ENCODE measurements at regions of chr5 and their contacts with region 1.

Region 1: GRCh38 chr5:142769741-142770631 is at the start of gene ARHGAP26:
- DNase-seq: peak; percentile 82 to 93 (median 87)
- ATAC-seq: peak; percentile 94
- H3K4me3 ChIP-seq: peak within 1 kb of the TSS; percentile 86
- H3K4me3 Mint-ChIP-seq: peak within 1 kb of the TSS; percentile 87 to 100 (median 96)
- H3K27ac ChIP-seq: peak within 1 kb of the TSS; percentile 77
- H3K27ac Mint-ChIP-seq: peak within 1 kb of the TSS; percentile 89 to 98 (median 92)
- H3K4me1 ChIP-seq: peaks cover 9 to 15% of the 10 kb centered on the region in 2 donors
- H3K4me1 Mint-ChIP-seq: peaks cover 30 to 39% (median 35%) of the 10 kb centered on the region in 7 donors
- H3K27me3 ChIP-seq: no peaks in the 10 kb centered on the region
- H3K27me3 Mint-ChIP-seq: peaks cover 0 to 3% (median 0%) of the 10 kb centered on the region in 5 donors
- total RNA-seq, gene ARHGAP26: 20.1 to 123 (median 29.1) TPM

Region 2: DNA sequence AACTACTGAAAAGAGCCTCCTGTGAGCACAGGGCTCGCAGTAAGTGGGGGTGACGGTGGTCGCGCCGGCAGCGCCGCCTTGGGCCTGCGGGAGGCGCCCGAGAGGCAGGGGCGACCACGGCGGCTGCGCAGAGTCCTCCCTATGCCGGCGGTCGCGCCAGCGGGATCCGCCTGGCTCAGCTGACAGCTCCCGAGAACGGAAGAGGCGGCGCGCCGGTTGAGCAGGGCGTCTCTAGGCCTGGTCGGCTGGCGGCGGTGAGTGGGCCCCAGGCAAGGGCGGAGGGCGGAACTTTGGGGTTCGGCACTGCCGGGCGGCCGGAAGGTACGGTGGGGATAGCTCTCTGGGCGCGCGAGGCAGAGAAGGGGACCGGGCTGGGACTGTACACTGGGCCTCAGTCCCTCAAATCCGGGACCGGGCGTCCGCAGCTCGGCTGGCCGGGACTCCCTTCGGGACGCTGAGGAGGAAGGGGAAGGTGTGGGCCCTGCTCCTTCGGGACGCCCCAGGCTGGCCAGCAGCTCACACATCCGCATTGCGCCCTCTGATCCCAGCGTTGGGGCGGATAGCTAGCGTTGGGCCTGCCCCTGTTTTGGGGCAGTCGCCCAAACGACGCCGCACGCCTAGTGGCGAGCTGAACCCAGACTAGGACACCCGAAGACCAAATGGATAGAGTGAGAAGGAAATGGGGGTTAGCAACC is 800.9 kb before region 1 on chr5 and contains the start of gene RNF14:
- CTCF ChIA-PET with region 1: no interaction called
- POLR2A ChIA-PET with region 1: no interaction called
- intact Hi-C with region 1: loop called in 1 of 2 experiments (anchors 5 kb)
- DNase-seq: peak; percentile 90 to 96 (median 92)
- ATAC-seq: peak; percentile 97
- H3K4me3 ChIP-seq: peak within 1 kb of the TSS; percentile 69
- H3K4me3 Mint-ChIP-seq: peak within 1 kb of the TSS; percentile 88 to 97 (median 94)
- H3K27ac ChIP-seq: peak within 1 kb of the TSS; percentile 94
- H3K27ac Mint-ChIP-seq: peak within 1 kb of the TSS; percentile 92 to 98 (median 97)
- H3K4me1 ChIP-seq: peaks cover 13 to 18% of the 10 kb centered on the region in 2 donors
- H3K4me1 Mint-ChIP-seq: peaks cover 12 to 47% (median 40%) of the 10 kb centered on the region in 7 donors
- H3K27me3 ChIP-seq: no peaks in the 10 kb centered on the region
- H3K27me3 Mint-ChIP-seq: peaks cover 0 to 2% (median 0%) of the 10 kb centered on the region in 5 donors
- total RNA-seq, gene RNF14: 14.7 to 32.0 (median 24.8) TPM

Region 3: DNA sequence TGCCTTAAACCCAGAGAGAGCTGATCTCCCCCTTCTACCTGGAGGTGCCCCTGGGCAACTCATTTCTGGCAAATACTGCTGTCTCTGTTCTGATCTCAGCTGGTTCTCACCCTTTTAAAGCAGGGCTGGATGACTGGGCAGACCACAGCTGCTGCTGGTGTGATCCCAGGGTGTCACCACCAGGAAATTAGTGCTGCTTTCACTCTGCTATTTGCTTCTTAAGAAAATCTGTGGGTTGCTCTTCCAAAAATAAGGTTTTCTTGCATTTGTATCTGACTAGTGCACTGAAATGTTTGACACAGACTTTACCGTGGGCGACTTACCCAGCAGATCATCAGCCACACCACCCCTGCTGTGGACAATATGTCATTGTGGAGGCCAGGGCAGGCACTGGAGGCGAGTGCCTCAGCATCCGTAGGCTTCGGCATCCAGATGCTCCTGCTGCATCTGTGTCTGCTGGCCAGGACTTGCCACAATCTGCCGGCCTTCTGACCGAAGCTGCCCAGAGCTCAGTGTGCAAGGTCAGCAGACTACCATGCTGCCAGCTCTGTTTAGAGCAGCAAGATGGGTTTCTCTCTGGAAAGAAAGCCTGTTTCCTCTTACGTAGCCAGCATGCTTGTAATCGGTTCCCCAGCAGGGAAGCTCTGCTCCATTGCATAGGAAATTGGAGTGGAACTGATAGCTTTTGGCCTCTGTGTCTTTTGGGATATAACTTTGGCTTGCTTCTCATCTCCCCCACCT is 13.8 kb after region 1 on chr5:
- CTCF ChIA-PET with region 1: interaction called, 4 read pairs
- POLR2A ChIA-PET with region 1: interaction called, 8 read pairs
- intact Hi-C with region 1: loop called (anchors 1 kb)
- DNase-seq: peak in 1 of 9 donors; percentile 56
- ATAC-seq: peak; percentile 66
- H3K4me3 ChIP-seq: peak overlapping the region; percentile 43
- H3K4me3 Mint-ChIP-seq: peak overlapping the region in 4 of 10 donors; percentile 18 to 62 (median 48)
- H3K27ac ChIP-seq: no peak overlapping the region
- H3K27ac Mint-ChIP-seq: peak overlapping the region in 6 of 9 donors; percentile 42 to 60 (median 48)
- H3K4me1 ChIP-seq: peaks cover 27 to 82% of the 10 kb centered on the region in 2 donors
- H3K4me1 Mint-ChIP-seq: peaks cover 39 to 78% (median 56%) of the 10 kb centered on the region in 7 donors
- H3K27me3 ChIP-seq: no peaks in the 10 kb centered on the region
- H3K27me3 Mint-ChIP-seq: no peaks in the 10 kb centered on the region

Region 4: GRCh38 chr5:142845402-142845921 is 75.5 kb after region 1 on chr5:
- CTCF ChIA-PET with region 1: interaction called, 3 read pairs
- POLR2A ChIA-PET with region 1: interaction called, 3 read pairs
- intact Hi-C with region 1: loop called in 1 of 2 experiments (anchors 5 kb)
- DNase-seq: peak in 3 of 9 donors; percentile 5 to 14 (median 8)
- ATAC-seq: peak; percentile 49
- H3K4me3 ChIP-seq: no peak overlapping the region
- H3K4me3 Mint-ChIP-seq: peak overlapping the region; percentile 26 to 56 (median 48)
- H3K27ac ChIP-seq: no peak overlapping the region
- H3K27ac Mint-ChIP-seq: peak overlapping the region; percentile 34 to 87 (median 63)
- H3K4me1 ChIP-seq: peaks cover 11 to 43% of the 10 kb centered on the region in 2 donors
- H3K4me1 Mint-ChIP-seq: peaks cover 27 to 84% (median 68%) of the 10 kb centered on the region in 7 donors
- H3K27me3 ChIP-seq: no peaks in the 10 kb centered on the region
- H3K27me3 Mint-ChIP-seq: peaks cover 0 to 2% (median 0%) of the 10 kb centered on the region in 5 donors

Region 5: GRCh38 chr5:143258559-143259253 is 488.7 kb after region 1 on chr5:
- CTCF ChIA-PET with region 1: no interaction called
- POLR2A ChIA-PET with region 1: no interaction called
- intact Hi-C with region 1: no loop called
- DNase-seq: no peak
- ATAC-seq: no peak
- H3K4me3 ChIP-seq: no peak overlapping the region
- H3K4me3 Mint-ChIP-seq: no peak overlapping the region
- H3K27ac ChIP-seq: no peak overlapping the region
- H3K27ac Mint-ChIP-seq: peak overlapping the region in 1 of 9 donors; percentile 41
- H3K4me1 ChIP-seq: no peaks in the 10 kb centered on the region
- H3K4me1 Mint-ChIP-seq: peaks cover 0 to 4% (median 0%) of the 10 kb centered on the region in 7 donors
- H3K27me3 ChIP-seq: no peaks in the 10 kb centered on the region
- H3K27me3 Mint-ChIP-seq: no peaks in the 10 kb centered on the region

Region 6: DNA sequence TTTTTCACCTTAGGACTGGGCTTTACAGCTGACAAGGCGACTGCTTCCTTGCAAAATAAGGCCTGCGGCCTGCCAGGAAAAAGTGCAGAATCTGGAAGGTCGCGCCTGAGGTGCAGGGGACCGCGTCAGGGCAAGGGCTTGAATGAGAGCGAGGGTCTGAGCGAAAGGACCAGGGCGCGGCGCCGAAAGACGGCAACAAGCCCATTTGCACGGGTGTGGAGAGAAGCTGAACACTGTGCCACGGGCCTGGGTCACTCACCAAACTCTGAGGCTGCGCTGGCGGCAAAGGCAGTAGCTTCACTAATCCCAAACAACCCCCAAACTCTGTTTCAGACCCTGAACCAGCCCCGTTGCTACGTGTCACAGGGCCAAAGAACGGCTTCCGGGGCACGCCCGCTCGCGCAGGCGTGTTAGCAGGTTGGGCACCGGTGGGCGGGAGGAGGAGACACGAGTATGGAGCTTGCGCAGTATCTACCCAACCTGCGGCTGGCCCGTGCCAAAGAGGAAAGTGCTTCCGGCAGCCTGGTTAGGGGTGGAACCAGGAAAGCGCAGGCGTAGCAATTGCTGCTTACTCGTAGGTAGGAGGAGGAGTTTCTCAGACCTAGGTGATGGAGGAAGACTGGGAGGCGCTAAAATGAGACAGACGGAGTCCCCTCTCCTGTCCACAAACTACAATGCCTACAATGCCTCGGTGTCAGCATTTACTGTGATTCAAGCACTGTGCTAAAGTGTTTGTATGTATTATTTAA is 1400.5 kb after region 1 on chr5 and contains the starts of genes KCTD16 and YIPF5:
- CTCF ChIA-PET with region 1: no interaction called
- POLR2A ChIA-PET with region 1: interaction called, 3 read pairs
- intact Hi-C with region 1: loop called in 1 of 2 experiments (anchors 1 kb)
- DNase-seq: peak; percentile 90 to 98 (median 98)
- ATAC-seq: peak; percentile 98
- H3K4me3 ChIP-seq: peak within 1 kb of the TSS; percentile 79
- H3K4me3 Mint-ChIP-seq: peak within 1 kb of the TSS; percentile 90 to 99 (median 94)
- H3K27ac ChIP-seq: peak within 1 kb of the TSS; percentile 91
- H3K27ac Mint-ChIP-seq: peak within 1 kb of the TSS; percentile 85 to 96 (median 95)
- H3K4me1 ChIP-seq: peaks cover 15 to 19% of the 10 kb centered on the region in 2 donors
- H3K4me1 Mint-ChIP-seq: peaks cover 19 to 56% (median 52%) of the 10 kb centered on the region in 7 donors
- H3K27me3 ChIP-seq: no peaks in the 10 kb centered on the region
- H3K27me3 Mint-ChIP-seq: peaks cover 0 to 29% (median 0%) of the 10 kb centered on the region in 5 donors
- total RNA-seq, gene KCTD16: 0.07 to 0.22 TPM in 2 of 5 experiments, not detected in the others
- total RNA-seq, gene YIPF5: 27.0 to 49.2 (median 38.6) TPM

Measured in naive thymus-derived CD4-positive, alpha-beta T cell (primary cell).